ENCODE measurements at regions of chr10 and their contacts with region 1.

Region 1: DNA sequence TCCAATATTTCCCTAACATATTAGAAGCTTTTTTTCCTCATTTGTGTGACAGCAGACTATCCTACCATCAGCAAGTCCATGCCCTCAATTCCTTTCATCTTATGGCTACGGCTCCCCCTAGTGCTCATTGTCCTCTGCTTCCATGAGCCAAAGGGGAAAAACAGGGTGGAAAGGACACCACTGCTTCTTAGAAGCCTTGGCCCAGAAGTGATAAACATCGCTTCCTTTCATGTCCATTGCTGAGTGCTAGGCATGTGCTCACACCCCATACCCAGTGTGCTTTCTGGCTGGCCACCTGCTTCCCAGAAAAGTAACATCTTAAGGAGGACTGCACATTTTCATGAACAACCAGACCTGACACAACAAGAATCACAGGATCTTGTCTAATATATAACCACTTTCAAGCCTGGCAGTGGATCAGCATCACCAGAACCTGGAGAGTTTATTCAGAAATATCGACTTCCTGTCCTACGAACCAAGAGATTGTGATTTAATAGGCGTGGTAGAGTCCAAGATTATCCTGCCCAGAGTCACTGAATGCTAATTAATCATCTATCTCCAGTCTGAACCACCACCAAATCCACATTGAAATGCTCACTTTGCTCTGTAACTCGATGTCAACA is 650.5 kb upstream of the SORCS1 start:
- DNase-seq: peak; percentile 22 to 67 (median 31)
- ATAC-seq: peak; percentile 69 to 72
- H3K4me3 ChIP-seq: no peak overlapping the region
- H3K27ac ChIP-seq: no peak overlapping the region
- H3K4me1 ChIP-seq: no peaks in the 10 kb centered on the region
- H3K27me3 ChIP-seq: no peaks in the 10 kb centered on the region

Region 2: DNA sequence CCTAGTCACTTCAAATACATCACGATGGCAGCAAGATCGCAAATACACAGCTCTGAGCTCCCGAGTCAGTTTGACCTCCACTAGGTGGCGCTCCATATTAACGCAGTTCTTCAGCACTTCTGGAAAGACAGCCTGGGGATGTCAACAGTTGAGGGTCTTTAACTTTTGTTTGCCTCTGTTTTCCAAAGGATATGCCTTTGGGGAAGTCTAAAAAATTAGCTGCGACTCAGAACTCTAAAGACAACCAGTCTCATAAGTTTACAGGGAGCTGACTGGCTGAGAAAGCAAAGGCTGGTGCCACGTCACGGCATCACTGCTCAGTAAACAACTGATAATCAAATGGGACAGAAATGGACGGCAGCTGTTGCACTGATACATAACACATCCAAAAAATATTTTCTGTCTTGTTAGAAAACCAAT is 1109.3 kb before region 1 on chr10:
- intact Hi-C with region 1: loop called in 1 of 4 experiments (anchors 5 kb)
- DNase-seq: peak; percentile 37 to 75 (median 49)
- ATAC-seq: peak; percentile 70 to 76
- H3K4me3 ChIP-seq: no peak overlapping the region
- H3K27ac ChIP-seq: no peak overlapping the region
- H3K4me1 ChIP-seq: no peaks in the 10 kb centered on the region
- H3K27me3 ChIP-seq: no peaks in the 10 kb centered on the region

Region 3: GRCh38 chr10:107409522-107409921 is 405.5 kb before region 1 on chr10:
- intact Hi-C with region 1: loop called in 3 of 4 experiments (anchors 5 to 10 kb)
- DNase-seq: peak in 1 of 3 donors; percentile 33
- ATAC-seq: peak in 1 of 2 donors; percentile 48
- H3K4me3 ChIP-seq: no peak overlapping the region
- H3K27ac ChIP-seq: no peak overlapping the region
- H3K4me1 ChIP-seq: no peaks in the 10 kb centered on the region
- H3K27me3 ChIP-seq: no peaks in the 10 kb centered on the region

Region 4: DNA sequence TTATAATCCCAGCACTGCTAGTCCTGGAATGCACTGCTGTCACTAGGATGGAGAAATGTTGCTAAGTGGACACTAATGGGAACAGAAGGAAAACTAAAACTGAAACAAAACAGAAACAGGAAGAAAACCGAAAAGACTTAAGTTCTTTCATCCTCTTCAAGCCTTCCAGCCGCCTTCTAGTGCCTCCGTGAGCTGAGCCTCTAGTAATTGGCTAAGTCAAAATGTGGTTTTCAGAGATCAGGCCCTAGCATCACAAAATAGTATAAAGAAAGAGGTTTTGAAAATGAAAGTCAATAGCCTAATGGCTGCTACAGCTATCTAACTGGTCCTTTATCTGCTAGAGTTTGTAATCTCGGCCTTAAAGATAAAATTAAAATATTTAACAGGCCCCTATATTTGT is 396.6 kb before region 1 on chr10:
- intact Hi-C with region 1: loop called in 1 of 4 experiments (anchors 5 kb)
- DNase-seq: no peak
- ATAC-seq: no peak
- H3K4me3 ChIP-seq: no peak overlapping the region
- H3K27ac ChIP-seq: no peak overlapping the region
- H3K4me1 ChIP-seq: no peaks in the 10 kb centered on the region
- H3K27me3 ChIP-seq: no peaks in the 10 kb centered on the region

Region 5: DNA sequence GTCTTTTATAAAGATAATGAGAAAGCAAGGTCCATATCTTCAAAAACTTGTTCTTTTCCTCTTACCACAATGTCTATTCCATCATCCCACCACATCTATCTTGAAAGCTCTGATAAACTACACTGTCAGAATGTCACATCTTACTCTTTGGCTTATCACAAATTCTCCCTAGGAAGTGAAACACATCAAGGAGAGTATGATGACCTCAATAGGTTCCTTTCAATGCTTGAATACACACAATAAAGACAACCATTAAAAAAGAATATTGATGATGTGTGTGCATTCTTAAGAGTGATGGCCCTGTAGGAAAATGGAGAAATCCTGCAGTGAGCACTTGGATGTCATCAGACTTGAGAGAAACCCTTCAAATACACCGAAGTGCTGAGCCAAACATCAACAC is 267.6 kb after region 1 on chr10:
- intact Hi-C with region 1: no loop called
- DNase-seq: no peak
- ATAC-seq: no peak
- H3K4me3 ChIP-seq: no peak overlapping the region
- H3K27ac ChIP-seq: no peak overlapping the region
- H3K4me1 ChIP-seq: no peaks in the 10 kb centered on the region
- H3K27me3 ChIP-seq: no peaks in the 10 kb centered on the region

Region 6: DNA sequence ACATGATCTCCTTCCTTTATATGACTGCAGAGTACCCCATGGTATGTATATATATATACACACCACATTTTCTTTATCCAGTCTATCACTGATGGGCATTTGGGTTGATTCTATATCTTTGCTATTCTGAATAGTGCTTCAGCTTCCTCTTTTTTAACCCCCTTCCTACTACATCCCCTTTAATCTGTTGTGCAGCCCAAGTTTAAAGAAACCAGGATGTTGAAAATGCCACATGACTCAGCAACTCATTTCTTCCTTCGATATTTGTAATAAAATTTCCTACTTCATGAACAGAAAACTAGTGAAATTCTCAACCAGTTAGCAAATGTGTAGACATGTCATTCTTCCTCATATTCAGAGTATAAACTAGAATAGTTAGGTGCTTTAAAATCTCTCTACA is 595.3 kb after region 1 on chr10:
- intact Hi-C with region 1: no loop called
- DNase-seq: no peak
- ATAC-seq: no peak
- H3K4me3 ChIP-seq: no peak overlapping the region
- H3K27ac ChIP-seq: no peak overlapping the region
- H3K4me1 ChIP-seq: no peaks in the 10 kb centered on the region
- H3K27me3 ChIP-seq: no peaks in the 10 kb centered on the region